CD8-positive, alpha-beta memory T cell (primary cell): ENCODE measurements at regions of chr2 and their contacts with region 1.

Region 1: GRCh38 chr2:113940891-113941290 is 51.0 kb downstream of the ACTR3 start:
- DNase-seq: no peak
- H3K4me3 ChIP-seq: no peak overlapping the region
- H3K4me3 Mint-ChIP-seq: no peak overlapping the region
- H3K27ac ChIP-seq: no peak overlapping the region
- H3K27ac Mint-ChIP-seq: peak overlapping the region in 1 of 8 donors; percentile 46
- H3K4me1 ChIP-seq: no peaks in the 10 kb centered on the region
- H3K4me1 Mint-ChIP-seq: peaks cover 8 to 27% (median 12%) of the 10 kb centered on the region in 3 donors
- H3K27me3 ChIP-seq: no peaks in the 10 kb centered on the region
- H3K27me3 Mint-ChIP-seq: no peaks in the 10 kb centered on the region

Region 2: DNA sequence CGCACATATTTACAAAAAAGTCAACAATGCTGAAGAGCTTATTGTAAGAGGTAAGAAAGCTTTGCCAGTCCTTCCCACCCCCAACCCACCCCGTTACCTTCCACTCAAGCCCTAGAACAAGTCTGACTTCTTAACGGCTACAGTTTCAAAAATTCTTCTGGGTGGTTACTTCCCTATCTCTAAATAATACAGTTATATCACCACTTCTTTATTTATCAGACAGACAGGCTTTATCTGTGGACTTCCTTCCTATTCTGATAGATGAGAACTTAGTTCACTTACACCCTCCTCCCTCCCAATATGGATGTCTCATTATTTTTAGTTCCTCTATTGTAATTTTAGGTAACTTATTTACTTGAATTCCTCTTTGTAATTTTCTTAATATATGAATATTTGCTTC is 77.7 kb before region 1 on chr2:
- CTCF ChIA-PET with region 1: no interaction called
- POLR2A ChIA-PET with region 1: no interaction called
- DNase-seq: no peak
- H3K4me3 ChIP-seq: no peak overlapping the region
- H3K4me3 Mint-ChIP-seq: no peak overlapping the region
- H3K27ac ChIP-seq: no peak overlapping the region
- H3K27ac Mint-ChIP-seq: no peak overlapping the region
- H3K4me1 ChIP-seq: no peaks in the 10 kb centered on the region
- H3K4me1 Mint-ChIP-seq: no peaks in the 10 kb centered on the region
- H3K27me3 ChIP-seq: no peaks in the 10 kb centered on the region
- H3K27me3 Mint-ChIP-seq: peaks cover 7 to 12% of the 10 kb centered on the region in 2 donors

Region 3: GRCh38 chr2:113930448-113930847 is 10.4 kb before region 1 on chr2:
- CTCF ChIA-PET with region 1: no interaction called
- POLR2A ChIA-PET with region 1: interaction called, 13 read pairs
- DNase-seq: no peak
- H3K4me3 ChIP-seq: no peak overlapping the region
- H3K4me3 Mint-ChIP-seq: no peak overlapping the region
- H3K27ac ChIP-seq: no peak overlapping the region
- H3K27ac Mint-ChIP-seq: peak overlapping the region in 5 of 8 donors; percentile 6 to 82 (median 53)
- H3K4me1 ChIP-seq: no peaks in the 10 kb centered on the region
- H3K4me1 Mint-ChIP-seq: peaks cover 36 to 58% (median 51%) of the 10 kb centered on the region in 3 donors
- H3K27me3 ChIP-seq: no peaks in the 10 kb centered on the region
- H3K27me3 Mint-ChIP-seq: no peaks in the 10 kb centered on the region

Region 4: DNA sequence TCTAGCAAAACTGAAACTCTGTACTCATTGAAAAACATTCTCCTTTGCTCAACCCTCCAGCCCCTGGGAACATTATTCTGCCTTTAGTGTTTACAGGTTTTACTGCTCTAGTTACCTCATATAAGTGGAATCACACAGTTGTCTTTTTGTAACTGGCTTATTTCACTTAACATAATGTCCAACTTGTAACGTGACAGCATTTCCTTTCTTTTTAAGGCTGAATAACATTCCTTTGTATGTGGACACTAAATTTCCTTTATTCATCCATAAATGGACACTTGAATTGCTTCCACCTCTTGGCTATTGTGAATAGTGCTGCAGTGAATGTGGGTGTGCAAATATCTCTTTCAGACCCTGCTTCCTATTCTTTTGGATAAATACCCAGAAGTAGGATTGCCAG is 93.9 kb after region 1 on chr2:
- CTCF ChIA-PET with region 1: no interaction called
- POLR2A ChIA-PET with region 1: no interaction called
- DNase-seq: no peak
- H3K4me3 ChIP-seq: no peak overlapping the region
- H3K4me3 Mint-ChIP-seq: no peak overlapping the region
- H3K27ac ChIP-seq: no peak overlapping the region
- H3K27ac Mint-ChIP-seq: no peak overlapping the region
- H3K4me1 ChIP-seq: no peaks in the 10 kb centered on the region
- H3K4me1 Mint-ChIP-seq: no peaks in the 10 kb centered on the region
- H3K27me3 ChIP-seq: no peaks in the 10 kb centered on the region
- H3K27me3 Mint-ChIP-seq: peaks cover 23 to 36% of the 10 kb centered on the region in 2 donors